GM12878 (cell line): ENCODE measurements at regions of chr11 and their contacts with region 1.

Region 1: DNA sequence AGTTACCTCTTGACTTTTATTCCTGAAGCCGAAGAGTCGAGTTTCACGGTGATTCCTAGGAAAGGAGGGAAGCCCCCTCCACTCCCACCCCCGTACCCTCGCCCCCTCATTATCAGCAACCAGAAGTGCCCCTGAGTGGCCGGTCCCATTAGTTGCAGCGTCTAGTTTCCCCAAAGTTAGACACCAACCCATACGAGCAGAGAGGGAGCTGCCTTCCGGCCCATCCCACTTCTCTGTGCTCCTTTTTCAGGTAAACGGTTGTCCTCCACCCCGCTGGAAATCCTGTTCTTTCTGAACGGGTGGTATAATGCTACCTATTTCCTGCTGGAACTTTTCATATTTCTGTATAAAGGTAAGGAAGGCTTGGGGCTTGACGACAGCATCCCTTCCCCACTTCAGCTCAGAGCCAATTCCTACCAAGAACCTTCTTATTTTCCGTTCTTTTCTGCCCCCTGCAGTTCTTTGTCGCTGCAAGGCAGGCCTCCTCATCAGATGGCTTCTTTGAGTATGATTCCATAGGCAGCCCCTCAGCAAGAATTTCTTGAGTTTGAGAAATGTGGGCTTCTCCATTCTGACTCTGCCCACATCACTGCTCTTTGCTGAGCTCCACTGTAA is 701 bp downstream of the TMEM216 start:
- DNase-seq: no peak
- ATAC-seq: peak; percentile 64
- H3K4me3 ChIP-seq: peak overlapping the region; percentile 89
- H3K27ac ChIP-seq: peak overlapping the region; percentile 39; the same call in 1 of the 2 replicates
- H3K4me1 ChIP-seq: peaks cover 4% of the 10 kb centered on the region
- H3K27me3 ChIP-seq: no peaks in the 10 kb centered on the region
- CTCF ChIP-seq: peak; percentile 18 to 53 (median 26); a peak in 5 of 6 replicates
- EP300 ChIP-seq: no peak
- POLR2A ChIP-seq: no peak
- RAD21 ChIP-seq: peak; percentile 41; the same call in 1 of the 2 replicates

Region 2: DNA sequence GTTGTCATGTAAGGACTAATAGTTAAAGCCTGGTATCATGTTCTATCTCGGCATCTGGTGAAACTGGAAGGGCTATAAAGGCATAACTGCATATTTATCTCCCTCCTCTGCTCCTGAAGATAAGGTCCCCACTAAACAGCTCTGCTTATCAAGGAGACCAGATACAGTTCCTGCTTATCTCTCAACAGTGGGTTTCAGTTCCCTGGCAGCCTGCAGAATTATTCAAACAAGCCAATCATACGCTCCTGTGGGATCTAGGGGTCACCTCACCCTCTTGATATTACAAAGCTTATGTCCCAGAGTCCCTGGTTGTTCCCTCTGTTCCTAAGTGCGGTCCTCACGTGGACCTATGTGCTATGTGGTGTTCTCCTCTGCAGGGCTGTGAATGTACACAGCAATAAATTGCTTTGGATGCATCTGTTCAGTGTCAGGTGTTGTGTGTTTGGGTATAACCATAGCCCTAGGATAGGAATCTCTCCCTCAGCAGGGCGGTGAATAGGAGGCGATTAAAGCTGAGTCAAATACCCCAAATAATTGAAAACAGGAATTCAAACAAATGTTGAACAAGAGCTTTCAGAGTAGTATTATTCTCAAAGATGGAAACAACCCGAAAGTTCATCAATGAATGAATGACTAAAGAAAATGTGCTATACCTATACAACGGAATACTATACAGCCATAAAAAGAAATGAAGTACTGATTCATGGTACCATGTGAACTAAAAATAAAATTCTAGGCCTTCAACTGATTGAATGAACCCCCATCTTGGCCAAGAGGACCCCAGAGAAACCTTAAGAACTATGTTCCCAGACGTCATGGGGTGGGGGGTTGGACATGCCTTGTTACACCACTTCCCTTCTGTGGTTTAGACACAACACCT is 1432.3 kb before region 1 on chr11:
- CTCF ChIA-PET with region 1: no interaction called
- POLR2A ChIA-PET with region 1: no interaction called
- RAD21 ChIA-PET with region 1: no interaction called
- SMC1A ChIA-PET with region 1: no interaction called
- in situ Hi-C with region 1: no loop called
- intact Hi-C with region 1: no loop called
- DNase-seq: no peak
- ATAC-seq: no peak
- H3K4me3 ChIP-seq: no peak overlapping the region
- H3K27ac ChIP-seq: no peak overlapping the region
- H3K4me1 ChIP-seq: no peaks in the 10 kb centered on the region
- H3K27me3 ChIP-seq: no peaks in the 10 kb centered on the region
- CTCF ChIP-seq: no peak
- EP300 ChIP-seq: no peak
- POLR2A ChIP-seq: no peak
- RAD21 ChIP-seq: no peak

Region 3: GRCh38 chr11:61254403-61255025 is 138.6 kb before region 1 on chr11:
- CTCF ChIA-PET with region 1: interaction called, 24 read pairs
- POLR2A ChIA-PET with region 1: no interaction called
- RAD21 ChIA-PET with region 1: interaction called, 8 read pairs
- SMC1A ChIA-PET with region 1: interaction called, 7 read pairs
- in situ Hi-C with region 1: loop called (anchors 5 kb)
- intact Hi-C with region 1: no loop called
- DNase-seq: peak; percentile 25
- ATAC-seq: peak; percentile 99
- H3K4me3 ChIP-seq: no peak overlapping the region
- H3K27ac ChIP-seq: no peak overlapping the region
- H3K4me1 ChIP-seq: no peaks in the 10 kb centered on the region
- H3K27me3 ChIP-seq: no peaks in the 10 kb centered on the region
- CTCF ChIP-seq: peak; percentile 93 to 99 (median 96)
- EP300 ChIP-seq: no peak
- POLR2A ChIP-seq: no peak
- RAD21 ChIP-seq: peak; percentile 84

Region 4: GRCh38 chr11:61347916-61348461 is 45.1 kb before region 1 on chr11:
- CTCF ChIA-PET with region 1: no interaction called
- POLR2A ChIA-PET with region 1: no interaction called
- RAD21 ChIA-PET with region 1: no interaction called
- SMC1A ChIA-PET with region 1: no interaction called
- in situ Hi-C with region 1: no loop called
- intact Hi-C with region 1: no loop called
- DNase-seq: no peak
- ATAC-seq: no peak
- H3K4me3 ChIP-seq: no peak overlapping the region
- H3K27ac ChIP-seq: no peak overlapping the region
- H3K4me1 ChIP-seq: no peaks in the 10 kb centered on the region
- H3K27me3 ChIP-seq: no peaks in the 10 kb centered on the region
- CTCF ChIP-seq: no peak
- EP300 ChIP-seq: no peak
- POLR2A ChIP-seq: no peak
- RAD21 ChIP-seq: no peak

Region 5: DNA sequence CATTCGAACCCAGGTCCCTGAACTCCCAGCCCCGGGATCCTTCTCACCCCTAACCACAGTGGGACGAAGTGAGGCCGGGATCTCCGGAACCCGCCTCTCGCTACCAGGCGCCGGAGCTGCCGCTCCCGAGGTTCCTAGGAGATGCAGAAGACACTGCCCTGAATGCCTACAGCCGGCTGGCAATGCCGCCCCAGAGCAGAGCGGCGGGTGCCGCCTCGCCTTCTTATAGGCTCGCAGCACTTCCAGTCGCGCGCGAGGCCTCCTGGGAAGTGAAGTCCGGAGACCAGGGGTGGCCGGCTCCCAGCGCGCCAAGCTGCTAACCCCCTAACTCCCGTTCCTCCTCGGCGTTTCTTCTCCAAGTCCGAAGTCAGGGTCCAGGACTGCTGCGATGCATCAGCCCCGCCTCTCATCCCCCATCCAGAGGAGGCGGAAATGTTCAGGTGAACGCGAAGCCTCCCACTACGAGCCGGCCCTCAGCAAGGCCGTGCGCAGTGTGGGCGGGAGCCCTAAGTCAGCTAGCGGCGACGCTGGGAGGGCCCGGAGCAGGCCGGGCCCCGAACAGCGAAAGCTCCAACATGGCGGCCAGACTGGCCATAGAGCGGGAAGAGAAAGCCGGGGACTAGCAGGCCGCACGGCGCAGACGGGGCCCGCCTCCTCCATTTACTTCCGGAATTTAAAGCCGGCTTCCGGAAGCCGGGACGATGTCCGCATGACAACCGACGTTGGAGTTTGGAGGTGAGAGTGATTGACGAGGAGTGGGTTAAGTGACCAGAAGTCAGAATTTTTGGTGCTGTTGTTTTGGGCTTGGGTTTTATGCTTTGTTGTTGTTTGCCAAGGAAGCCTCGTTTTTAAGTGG is 31.2 kb before region 1 on chr11 and contains the starts of genes CYB561A3 and TMEM138:
- CTCF ChIA-PET with region 1: interaction called, 7 read pairs
- POLR2A ChIA-PET with region 1: interaction called, 25 read pairs
- RAD21 ChIA-PET with region 1: interaction called, 8 read pairs
- SMC1A ChIA-PET with region 1: interaction called, 8 read pairs
- in situ Hi-C with region 1: no loop called
- intact Hi-C with region 1: no loop called
- DNase-seq: peak; percentile 85
- ATAC-seq: peak; percentile 88
- H3K4me3 ChIP-seq: peak within 1 kb of the TSS; percentile 99
- H3K27ac ChIP-seq: peak within 1 kb of the TSS; percentile 98
- H3K4me1 ChIP-seq: peaks cover 29% of the 10 kb centered on the region
- H3K27me3 ChIP-seq: no peaks in the 10 kb centered on the region
- CTCF ChIP-seq: no peak
- EP300 ChIP-seq: peak; percentile 16 to 39; a peak in 1 of 4 replicates
- POLR2A ChIP-seq: peak; percentile 94
- RAD21 ChIP-seq: no peak
- polyA plus RNA-seq, gene CYB561A3: 40.1 to 53.5 TPM
- polyA plus RNA-seq, gene TMEM138: 64.2 to 87.2 TPM

Region 6: GRCh38 chr11:61429691-61430582 is 36.8 kb after region 1 on chr11 and contains the starts of genes CPSF7 and SDHAF2:
- CTCF ChIA-PET with region 1: interaction called, 12 read pairs
- POLR2A ChIA-PET with region 1: interaction called, 16 read pairs
- RAD21 ChIA-PET with region 1: interaction called, 8 read pairs
- SMC1A ChIA-PET with region 1: interaction called, 11 read pairs
- in situ Hi-C with region 1: no loop called
- intact Hi-C with region 1: no loop called
- DNase-seq: peak; percentile 69
- ATAC-seq: peak; percentile 93
- H3K4me3 ChIP-seq: peak within 1 kb of the TSS; percentile 87
- H3K27ac ChIP-seq: peak within 1 kb of the TSS; percentile 99
- H3K4me1 ChIP-seq: peaks cover 7% of the 10 kb centered on the region
- H3K27me3 ChIP-seq: no peaks in the 10 kb centered on the region
- CTCF ChIP-seq: no peak
- EP300 ChIP-seq: no peak
- POLR2A ChIP-seq: peak; percentile 93
- RAD21 ChIP-seq: no peak
- polyA plus RNA-seq, gene CPSF7: 14.9 to 21.9 TPM
- polyA plus RNA-seq, gene SDHAF2: 155 to 160 TPM

Region 7: GRCh38 chr11:61602775-61603569 is 209.9 kb after region 1 on chr11:
- CTCF ChIA-PET with region 1: no interaction called
- POLR2A ChIA-PET with region 1: no interaction called
- RAD21 ChIA-PET with region 1: no interaction called
- SMC1A ChIA-PET with region 1: no interaction called
- in situ Hi-C with region 1: no loop called
- intact Hi-C with region 1: no loop called
- DNase-seq: no peak
- ATAC-seq: no peak
- H3K4me3 ChIP-seq: no peak overlapping the region
- H3K27ac ChIP-seq: no peak overlapping the region
- H3K4me1 ChIP-seq: no peaks in the 10 kb centered on the region
- H3K27me3 ChIP-seq: peaks cover 3 to 7% of the 10 kb centered on the region in 2 experiments; a peak in 3 of 4 replicates
- CTCF ChIP-seq: no peak
- EP300 ChIP-seq: no peak
- POLR2A ChIP-seq: no peak
- RAD21 ChIP-seq: no peak

Region 8: DNA sequence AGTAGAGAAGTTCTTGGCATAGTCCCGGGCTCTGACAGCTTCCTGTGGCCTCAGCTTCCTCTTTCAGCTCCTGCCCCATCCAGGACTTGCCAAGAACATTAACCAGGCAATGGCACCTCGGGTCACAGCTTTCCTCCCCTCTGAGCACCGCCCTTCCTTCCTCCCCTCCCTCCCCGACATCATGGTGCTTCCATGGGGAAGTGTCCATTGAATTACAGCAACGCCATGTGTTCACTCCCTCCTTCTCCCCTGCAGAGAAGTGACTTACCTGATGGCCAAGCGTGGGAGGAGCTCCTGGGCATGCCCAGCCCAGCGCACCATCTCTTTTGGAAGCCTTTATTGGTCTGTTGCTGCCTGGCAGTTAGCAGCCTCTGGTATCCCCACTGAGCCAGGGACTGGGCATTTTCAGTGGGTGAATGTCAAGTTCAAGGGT is 261.3 kb after region 1 on chr11:
- CTCF ChIA-PET with region 1: no interaction called
- POLR2A ChIA-PET with region 1: no interaction called
- RAD21 ChIA-PET with region 1: no interaction called
- SMC1A ChIA-PET with region 1: no interaction called
- in situ Hi-C with region 1: no loop called
- intact Hi-C with region 1: no loop called
- DNase-seq: no peak
- ATAC-seq: no peak; the same call in 2 of the 3 replicates
- H3K4me3 ChIP-seq: no peak overlapping the region
- H3K27ac ChIP-seq: no peak overlapping the region
- H3K4me1 ChIP-seq: no peaks in the 10 kb centered on the region
- H3K27me3 ChIP-seq: no peaks in the 10 kb centered on the region; a peak in 2 of 4 replicates
- CTCF ChIP-seq: no peak
- EP300 ChIP-seq: no peak
- POLR2A ChIP-seq: no peak
- RAD21 ChIP-seq: no peak